ENCODE measurements at regions of chr13 and their contacts with region 1.

Region 1: DNA sequence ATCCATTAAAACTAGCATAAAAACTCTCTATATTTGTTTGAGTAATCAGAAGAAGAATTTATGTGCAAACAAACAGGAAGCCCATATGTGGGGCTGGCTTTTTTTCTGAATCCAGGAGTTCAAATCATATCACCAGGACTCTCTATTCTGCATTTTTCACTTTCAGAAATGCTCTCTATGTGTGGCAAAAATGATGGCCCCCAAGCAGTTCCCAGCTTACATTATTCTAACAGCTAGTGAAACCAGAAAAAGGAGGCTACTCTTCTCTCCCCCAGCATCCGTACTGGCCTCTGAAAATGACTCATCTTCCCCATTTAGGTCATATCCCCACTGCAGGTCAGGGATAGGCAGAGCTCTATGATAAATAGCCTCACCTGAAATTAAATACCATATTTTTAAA is 20.4 kb downstream of the RBM26 start:
- DNase-seq: peak; percentile 60
- H3K4me3 Mint-ChIP-seq: peak overlapping the region; percentile 38
- H3K27ac Mint-ChIP-seq: peak overlapping the region; percentile 33
- H3K4me1 Mint-ChIP-seq: peaks cover 76% of the 10 kb centered on the region
- H3K27me3 Mint-ChIP-seq: no peaks in the 10 kb centered on the region

Region 2: GRCh38 chr13:79003989-79004898 is 381.4 kb before region 1 on chr13:
- CTCF ChIA-PET with region 1: no interaction called
- POLR2A ChIA-PET with region 1: no interaction called
- intact Hi-C with region 1: loop called (anchors 10 kb)
- DNase-seq: no peak
- H3K4me3 Mint-ChIP-seq: no peak overlapping the region
- H3K27ac Mint-ChIP-seq: no peak overlapping the region
- H3K4me1 Mint-ChIP-seq: peaks cover 7% of the 10 kb centered on the region
- H3K27me3 Mint-ChIP-seq: peaks cover 10% of the 10 kb centered on the region

Region 3: DNA sequence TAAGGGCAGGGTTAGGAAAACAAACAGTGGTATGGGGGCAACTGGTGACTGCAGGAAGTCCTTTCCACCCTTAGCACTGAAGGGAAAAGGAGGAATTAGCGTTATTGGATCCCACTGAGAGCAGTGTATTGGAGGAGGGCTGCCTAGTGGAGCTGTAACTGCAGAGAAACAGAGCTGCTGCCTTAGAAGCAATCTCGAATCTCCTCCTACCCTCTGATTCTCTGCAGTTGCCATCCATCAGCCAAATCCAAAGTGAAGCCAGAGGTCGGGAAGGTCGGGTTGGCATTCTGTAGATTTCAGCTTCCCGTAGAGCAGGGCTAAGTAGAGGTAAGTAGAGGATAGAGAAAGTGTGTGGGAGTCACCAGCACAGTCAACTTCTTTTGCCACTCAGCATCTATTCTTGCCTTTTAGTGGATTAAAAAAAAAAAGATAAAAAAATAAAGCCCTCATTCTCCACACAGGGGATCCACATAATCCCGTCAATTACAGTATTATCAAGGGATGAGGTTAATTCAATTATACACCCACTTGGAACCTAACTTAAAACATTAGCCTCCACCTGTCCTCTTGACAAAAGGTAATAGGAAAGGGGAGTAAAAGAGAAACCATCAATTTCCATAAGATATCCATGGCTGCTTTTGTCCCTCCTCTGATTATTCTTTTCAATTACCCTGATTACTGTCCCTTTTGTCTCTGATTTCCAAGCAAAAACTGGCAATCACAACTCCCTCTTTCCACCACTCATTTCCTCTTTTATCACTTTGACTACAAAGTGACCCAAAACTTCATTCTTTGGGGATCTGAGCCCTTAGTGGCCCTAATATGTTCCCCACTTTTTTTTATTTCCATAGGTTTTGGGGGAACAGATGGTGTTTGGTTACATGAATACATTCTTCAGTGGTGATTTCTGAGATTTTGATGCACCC is 214.3 kb before region 1 on chr13:
- CTCF ChIA-PET with region 1: no interaction called
- POLR2A ChIA-PET with region 1: no interaction called
- intact Hi-C with region 1: no loop called
- DNase-seq: no peak
- H3K4me3 Mint-ChIP-seq: no peak overlapping the region
- H3K27ac Mint-ChIP-seq: no peak overlapping the region
- H3K4me1 Mint-ChIP-seq: no peaks in the 10 kb centered on the region
- H3K27me3 Mint-ChIP-seq: peaks cover 17% of the 10 kb centered on the region

Region 4: DNA sequence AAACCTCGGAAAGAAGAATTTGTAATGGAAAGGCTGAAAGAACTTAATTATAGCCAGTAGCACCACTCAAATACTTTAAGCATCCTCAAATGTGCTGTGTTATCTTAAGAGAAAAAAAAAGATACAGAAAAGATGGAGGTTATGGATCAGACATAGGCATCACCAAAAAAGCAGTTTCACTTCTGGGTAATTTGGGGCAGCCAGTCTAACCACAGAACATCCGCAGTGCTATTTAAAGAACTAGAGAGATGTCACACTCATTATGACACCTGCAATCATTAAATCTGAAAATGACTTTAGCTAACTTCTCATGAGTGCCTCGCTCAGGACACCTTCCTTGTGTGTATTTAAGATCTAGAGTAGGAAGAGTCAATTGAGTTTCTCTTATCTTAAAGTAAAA is 191.4 kb before region 1 on chr13:
- CTCF ChIA-PET with region 1: interaction called, 5 read pairs
- POLR2A ChIA-PET with region 1: no interaction called
- intact Hi-C with region 1: loop called (anchors 1 kb)
- DNase-seq: peak; percentile 79
- H3K4me3 Mint-ChIP-seq: no peak overlapping the region
- H3K27ac Mint-ChIP-seq: no peak overlapping the region
- H3K4me1 Mint-ChIP-seq: peaks cover 38% of the 10 kb centered on the region
- H3K27me3 Mint-ChIP-seq: no peaks in the 10 kb centered on the region

Region 5: GRCh38 chr13:79320433-79320832 is 65.3 kb before region 1 on chr13:
- CTCF ChIA-PET with region 1: no interaction called
- POLR2A ChIA-PET with region 1: no interaction called
- intact Hi-C with region 1: loop called (anchors 5 kb)
- DNase-seq: no peak
- H3K4me3 Mint-ChIP-seq: no peak overlapping the region
- H3K27ac Mint-ChIP-seq: no peak overlapping the region
- H3K4me1 Mint-ChIP-seq: peaks cover 10% of the 10 kb centered on the region
- H3K27me3 Mint-ChIP-seq: no peaks in the 10 kb centered on the region

Region 6: DNA sequence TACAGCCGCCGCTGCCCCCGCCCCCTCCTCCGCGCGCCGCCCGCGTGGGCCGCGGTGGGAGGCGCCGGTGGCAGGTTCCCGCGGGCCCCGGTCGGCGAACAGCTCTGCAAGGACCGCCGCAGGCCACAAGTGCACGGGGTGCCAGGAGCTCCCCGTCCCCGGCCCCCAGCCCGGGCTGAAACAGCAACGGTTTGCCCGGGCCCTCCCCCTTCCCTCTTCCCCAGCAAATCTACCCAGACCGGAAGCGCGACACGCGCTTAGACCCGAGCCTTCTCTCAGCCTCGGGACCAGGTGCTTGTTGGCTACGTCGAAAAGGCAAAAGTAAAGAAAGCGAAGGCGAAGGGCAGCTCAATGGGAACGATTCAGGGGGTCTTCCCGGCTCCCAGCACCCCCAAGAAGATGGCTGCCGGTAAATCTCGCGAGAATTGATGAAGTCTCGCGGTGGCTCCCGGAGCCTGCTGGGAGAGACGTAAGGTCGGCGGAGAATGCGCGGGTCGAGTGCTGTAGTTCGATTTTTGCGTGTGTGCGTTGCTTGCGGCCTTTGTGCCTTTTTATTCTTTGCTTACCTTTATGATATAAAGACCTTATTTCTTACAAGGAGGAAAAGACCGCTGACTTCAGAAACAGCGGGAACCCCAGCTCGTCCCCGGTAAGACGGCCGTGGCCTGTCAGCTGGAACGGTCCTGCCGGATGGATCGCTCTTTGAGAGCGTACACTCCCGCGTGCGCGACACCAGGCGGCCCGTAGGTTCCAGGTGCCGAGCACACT is 20.3 kb after region 1 on chr13 and contains the start of gene RBM26:
- CTCF ChIA-PET with region 1: interaction called, 29 read pairs
- POLR2A ChIA-PET with region 1: interaction called, 8 read pairs
- intact Hi-C with region 1: loop called (anchors 1 kb)
- DNase-seq: peak; percentile 96
- H3K4me3 Mint-ChIP-seq: peak within 1 kb of the TSS; percentile 88
- H3K27ac Mint-ChIP-seq: no peak within 1 kb of the TSS
- H3K4me1 Mint-ChIP-seq: peaks cover 38% of the 10 kb centered on the region
- H3K27me3 Mint-ChIP-seq: no peaks in the 10 kb centered on the region
- total RNA-seq, gene RBM26: 54.8 to 57.7 TPM

Region 7: DNA sequence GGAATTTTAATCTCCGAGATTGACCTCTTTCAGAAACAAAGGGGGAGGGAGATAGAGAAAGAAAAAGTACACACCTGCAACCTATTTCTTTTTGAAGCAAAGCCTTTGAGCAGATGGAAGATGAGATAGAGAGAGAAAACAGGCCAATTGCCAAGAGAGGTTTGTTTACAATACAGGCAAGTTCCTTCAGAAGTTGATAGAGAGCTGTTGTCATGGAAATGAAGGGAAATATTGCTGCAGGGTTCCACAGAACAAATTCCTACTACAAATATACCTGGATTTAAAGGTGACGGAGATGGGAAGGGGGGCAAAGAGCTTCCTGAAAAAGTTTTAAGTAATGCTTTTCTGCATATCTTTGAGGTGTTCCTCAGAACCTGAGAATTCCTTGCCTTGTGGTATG is 483.6 kb after region 1 on chr13:
- CTCF ChIA-PET with region 1: no interaction called
- POLR2A ChIA-PET with region 1: no interaction called
- intact Hi-C with region 1: no loop called
- DNase-seq: no peak
- H3K4me3 Mint-ChIP-seq: no peak overlapping the region
- H3K27ac Mint-ChIP-seq: no peak overlapping the region
- H3K4me1 Mint-ChIP-seq: no peaks in the 10 kb centered on the region
- H3K27me3 Mint-ChIP-seq: no peaks in the 10 kb centered on the region

Measured in activated CD4-positive, alpha-beta memory T cell treated with anti-CD3 and anti-CD28 coated beads for 36 hours (primary cell).